ENCODE measurements at regions of chr2 and their contacts with region 1.

Region 1: GRCh38 chr2:113248997-113249770 is 29.5 kb downstream of the PAX8 start:
- DNase-seq: peak; percentile 80 to 90 (median 87)
- ATAC-seq: peak; percentile 62 to 78
- H3K4me3 ChIP-seq: no peak overlapping the region
- H3K27ac ChIP-seq: no peak overlapping the region
- H3K4me1 ChIP-seq: no peaks in the 10 kb centered on the region
- H3K27me3 ChIP-seq: no peaks in the 10 kb centered on the region

Region 2: GRCh38 chr2:113181258-113182051 is 67.7 kb before region 1 on chr2:
- intact Hi-C with region 1: no loop called
- DNase-seq: no peak
- ATAC-seq: peak in 1 of 2 donors; percentile 33
- H3K4me3 ChIP-seq: no peak overlapping the region
- H3K27ac ChIP-seq: no peak overlapping the region
- H3K4me1 ChIP-seq: peaks cover 2% of the 10 kb centered on the region
- H3K27me3 ChIP-seq: no peaks in the 10 kb centered on the region

Region 3: DNA sequence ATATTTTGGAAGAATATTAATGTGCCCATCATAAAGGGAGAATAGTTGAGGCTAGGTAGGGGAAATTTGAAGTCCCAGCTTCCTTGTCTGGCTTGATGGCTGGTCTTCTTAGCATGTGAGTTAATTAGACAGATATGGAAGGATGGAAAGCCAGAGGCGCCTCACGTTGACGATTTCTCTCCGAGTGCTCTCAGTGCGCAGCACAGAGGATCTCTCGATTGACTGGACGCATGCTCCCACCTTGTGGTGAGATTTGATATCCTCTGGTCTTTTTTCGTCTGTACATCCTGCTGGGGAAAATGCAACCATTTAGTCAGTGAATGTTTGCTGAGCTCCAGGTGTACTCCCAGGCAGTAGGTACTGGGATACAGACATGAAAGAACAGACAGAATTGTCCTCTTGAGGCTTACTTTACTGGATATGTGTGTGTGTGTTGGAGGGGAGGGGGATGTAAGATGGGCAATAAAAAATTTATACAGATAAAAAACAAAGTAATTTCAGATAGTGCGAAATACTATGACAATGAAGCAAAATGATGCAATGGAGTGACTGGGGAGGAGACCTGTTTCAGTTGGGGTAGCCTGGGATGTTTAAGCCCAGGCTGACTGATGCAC is 121.4 kb after region 1 on chr2:
- intact Hi-C with region 1: loop called (anchors 2 to 5 kb)
- DNase-seq: peak; percentile 63 to 77 (median 74)
- ATAC-seq: peak; percentile 82 to 90
- H3K4me3 ChIP-seq: no peak overlapping the region
- H3K27ac ChIP-seq: no peak overlapping the region
- H3K4me1 ChIP-seq: peaks cover 1% of the 10 kb centered on the region
- H3K27me3 ChIP-seq: no peaks in the 10 kb centered on the region